HCT116 (cell line): ENCODE measurements at regions of chr4 and their contacts with region 1.

Region 1: GRCh38 chr4:159206427-159206871 is 103.6 kb downstream of the RAPGEF2 start:
- DNase-seq: no peak
- ATAC-seq: no peak
- H3K4me3 ChIP-seq: no peak overlapping the region
- H3K27ac ChIP-seq: no peak overlapping the region
- H3K4me1 ChIP-seq: no peaks in the 10 kb centered on the region
- H3K27me3 ChIP-seq: no peaks in the 10 kb centered on the region
- CTCF ChIP-seq: no peak
- POLR2A ChIP-seq: no peak
- RAD21 ChIP-seq: no peak

Region 2: DNA sequence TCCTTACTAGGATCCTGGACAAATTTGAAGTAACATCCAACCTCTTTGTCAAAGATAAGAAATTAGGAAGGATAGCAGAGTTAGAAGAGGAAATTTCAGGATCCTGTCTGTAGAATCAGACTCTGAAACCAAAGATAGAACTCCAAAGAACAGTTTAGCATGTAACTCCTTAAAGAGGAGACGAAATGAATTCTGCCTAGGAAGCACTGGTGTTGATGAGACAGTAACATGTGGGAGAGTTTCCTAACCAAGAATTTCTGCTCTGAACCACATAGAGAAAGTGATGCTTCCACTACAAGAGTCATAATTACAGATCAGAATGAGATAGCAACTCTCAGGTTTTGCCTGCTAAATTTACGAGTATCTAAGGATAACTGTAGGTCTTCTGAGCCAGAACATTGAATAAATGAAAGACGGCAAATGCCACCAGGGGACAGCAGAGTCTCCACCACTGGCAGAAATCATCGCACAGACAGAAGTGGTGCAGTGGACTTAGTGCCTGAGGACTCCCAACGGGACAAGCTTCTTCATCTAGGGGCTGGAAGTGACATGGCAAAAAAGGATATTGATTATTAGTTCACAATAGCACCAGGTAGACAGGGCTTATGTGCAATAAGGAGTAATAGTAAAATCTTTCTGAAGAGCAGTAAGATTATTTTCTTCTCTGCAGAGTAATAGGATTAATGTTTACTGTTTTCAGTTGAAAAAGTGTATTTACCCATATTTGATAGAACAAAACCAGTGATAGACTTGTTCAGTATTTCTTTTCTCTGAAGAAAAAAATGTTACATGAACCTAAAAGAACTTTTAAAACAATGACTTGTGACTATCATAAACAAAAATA is 476.5 kb before region 1 on chr4:
- CTCF ChIA-PET with region 1: interaction called, 4 read pairs
- POLR2A ChIA-PET with region 1: no interaction called
- RAD21 ChIA-PET with region 1: no interaction called
- intact Hi-C with region 1: loop called (anchors 1 kb)
- DNase-seq: peak; percentile 61
- ATAC-seq: peak; percentile 99
- H3K4me3 ChIP-seq: no peak overlapping the region
- H3K27ac ChIP-seq: no peak overlapping the region
- H3K4me1 ChIP-seq: no peaks in the 10 kb centered on the region
- H3K27me3 ChIP-seq: peaks cover 7% of the 10 kb centered on the region; the same call in 1 of the 2 replicates
- CTCF ChIP-seq: peak; percentile 71 to 86 (median 81)
- POLR2A ChIP-seq: no peak
- RAD21 ChIP-seq: peak; percentile 90

Region 3: GRCh38 chr4:158856852-158857251 is 349.6 kb before region 1 on chr4:
- CTCF ChIA-PET with region 1: interaction called, 5 read pairs
- POLR2A ChIA-PET with region 1: no interaction called
- RAD21 ChIA-PET with region 1: interaction called in 1 of 2 experiments, 3 read pairs
- intact Hi-C with region 1: loop called (anchors 1 kb)
- DNase-seq: peak; percentile 26
- ATAC-seq: peak; percentile 95
- H3K4me3 ChIP-seq: no peak overlapping the region
- H3K27ac ChIP-seq: no peak overlapping the region
- H3K4me1 ChIP-seq: no peaks in the 10 kb centered on the region
- H3K27me3 ChIP-seq: no peaks in the 10 kb centered on the region
- CTCF ChIP-seq: peak; percentile 49 to 83 (median 67)
- POLR2A ChIP-seq: no peak
- RAD21 ChIP-seq: peak; percentile 91